SK-N-SH (cell line): ENCODE measurements at regions of chr17 and their contacts with region 1.

Region 1: DNA sequence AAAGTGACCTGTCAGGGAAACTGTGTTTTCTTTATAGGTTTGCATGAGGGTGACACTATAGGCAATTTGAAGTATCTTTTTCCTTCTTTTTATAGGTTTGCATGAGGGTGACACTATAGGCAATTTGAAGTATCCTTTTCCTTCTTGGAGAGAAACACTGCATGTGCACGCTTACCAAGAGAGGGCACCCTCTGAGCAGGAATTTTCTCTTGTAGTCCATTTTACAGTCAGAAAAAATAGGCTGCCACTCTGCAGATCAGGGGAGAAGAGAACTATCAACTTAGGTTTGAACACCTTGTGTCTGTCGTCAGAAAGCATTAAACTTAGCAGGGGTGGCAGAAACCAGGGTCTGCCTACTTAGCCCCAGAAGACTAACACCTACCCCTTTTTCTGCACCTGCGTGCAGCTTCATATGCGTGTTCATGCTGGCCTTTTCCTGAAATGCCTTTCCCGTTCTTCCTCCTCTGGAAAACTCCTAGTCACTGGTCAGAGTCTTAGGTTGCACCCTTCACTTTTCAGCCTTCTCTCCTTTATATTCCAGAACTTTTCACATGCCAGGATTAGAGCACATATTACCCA is 16.4 kb upstream of the SMIM36 start:
- DNase-seq: peak; percentile 74
- H3K4me3 ChIP-seq: no peak overlapping the region; a peak in 1 of 4 replicates
- H3K27ac ChIP-seq: no peak overlapping the region
- H3K4me1 ChIP-seq: peaks cover 0 to 2% of the 10 kb centered on the region in 2 experiments; a peak in 1 of 4 replicates
- H3K27me3 ChIP-seq: no peaks in the 10 kb centered on the region
- CTCF ChIP-seq: peak; percentile 87
- EP300 ChIP-seq: no peak
- RAD21 ChIP-seq: peak; percentile 99

Region 2: GRCh38 chr17:55452139-55452790 is 75.4 kb before region 1 on chr17:
- CTCF ChIA-PET with region 1: no interaction called
- POLR2A ChIA-PET with region 1: no interaction called
- DNase-seq: peak; percentile 50
- H3K4me3 ChIP-seq: no peak overlapping the region
- H3K27ac ChIP-seq: peak overlapping the region; percentile 81 to 92
- H3K4me1 ChIP-seq: peaks cover 21 to 55% of the 10 kb centered on the region in 2 experiments
- H3K27me3 ChIP-seq: no peaks in the 10 kb centered on the region
- CTCF ChIP-seq: no peak
- EP300 ChIP-seq: peak; percentile 9 to 47; a peak in 3 of 4 replicates
- RAD21 ChIP-seq: no peak

Region 3: GRCh38 chr17:55570360-55570759 is 42.7 kb after region 1 on chr17:
- CTCF ChIA-PET with region 1: interaction called, 15 read pairs
- POLR2A ChIA-PET with region 1: no interaction called
- DNase-seq: no peak
- H3K4me3 ChIP-seq: no peak overlapping the region
- H3K27ac ChIP-seq: no peak overlapping the region
- H3K4me1 ChIP-seq: peaks cover 0 to 22% of the 10 kb centered on the region in 2 experiments; a peak in 2 of 4 replicates
- H3K27me3 ChIP-seq: 0 out of 2 replicates have a peak, but pooled peaks cover 6% of the 10 kb centered on the region
- CTCF ChIP-seq: no peak
- EP300 ChIP-seq: no peak
- RAD21 ChIP-seq: no peak

Region 4: DNA sequence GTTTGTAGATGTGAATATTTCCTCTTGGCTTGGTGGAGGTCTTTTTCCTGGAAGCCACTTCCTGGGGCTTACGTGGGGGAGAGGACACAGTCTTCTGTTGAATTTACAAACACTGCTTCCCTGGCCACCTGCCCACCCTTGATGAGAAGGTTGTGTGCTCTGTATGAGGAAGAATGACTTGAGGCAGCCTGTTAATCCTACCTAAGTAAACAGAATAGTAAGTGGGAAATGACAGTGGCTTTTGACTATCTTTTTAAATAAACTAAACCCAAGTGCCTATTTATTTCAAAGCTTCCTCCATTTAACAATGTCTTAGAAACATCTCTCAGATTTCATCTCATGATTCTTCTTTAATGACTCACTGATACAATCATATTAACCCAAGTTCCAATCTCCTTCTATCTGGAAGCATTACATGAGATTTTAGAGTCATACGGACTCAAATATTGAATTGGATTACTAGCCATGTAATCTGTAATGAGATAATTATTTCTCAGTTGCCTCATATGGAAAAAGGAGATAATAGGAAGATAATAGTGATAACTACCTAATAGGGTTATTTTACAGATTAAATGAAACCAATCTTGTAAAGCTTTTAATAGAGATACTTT is 80.2 kb after region 1 on chr17:
- CTCF ChIA-PET with region 1: interaction called, 85 read pairs
- POLR2A ChIA-PET with region 1: no interaction called
- DNase-seq: no peak
- H3K4me3 ChIP-seq: no peak overlapping the region
- H3K27ac ChIP-seq: no peak overlapping the region
- H3K4me1 ChIP-seq: peaks cover 7 to 10% of the 10 kb centered on the region in 2 experiments; a peak in 3 of 4 replicates
- H3K27me3 ChIP-seq: no peaks in the 10 kb centered on the region
- CTCF ChIP-seq: no peak
- EP300 ChIP-seq: peak in 1 of 2 experiments; percentile 45; a peak in 1 of 4 replicates
- RAD21 ChIP-seq: no peak

Region 5: DNA sequence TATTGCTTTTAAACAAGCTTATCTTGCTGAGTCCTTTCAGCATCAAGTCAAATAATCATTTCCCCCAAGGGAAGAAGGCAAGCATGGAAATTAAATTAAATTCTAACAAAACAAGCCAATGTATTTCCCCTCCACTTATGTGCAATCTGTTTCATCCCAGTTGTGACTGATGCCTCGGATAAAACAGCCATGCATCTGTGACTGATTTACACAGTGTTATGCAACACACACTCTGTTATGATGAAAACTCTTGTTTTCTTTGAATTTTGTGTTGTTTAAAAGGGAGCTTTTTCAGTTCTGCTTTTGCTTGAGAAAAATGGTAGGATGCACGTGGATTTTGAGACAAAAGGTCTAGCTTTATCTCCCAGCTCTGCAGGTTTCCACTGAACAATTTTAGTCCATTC is 162.5 kb after region 1 on chr17:
- CTCF ChIA-PET with region 1: interaction called, 46 read pairs
- POLR2A ChIA-PET with region 1: no interaction called
- DNase-seq: peak; percentile 58
- H3K4me3 ChIP-seq: no peak overlapping the region
- H3K27ac ChIP-seq: peak overlapping the region in 1 of 2 experiments; percentile 99; a peak in 2 of 4 replicates
- H3K4me1 ChIP-seq: peaks cover 0 to 54% of the 10 kb centered on the region in 2 experiments; a peak in 3 of 4 replicates
- H3K27me3 ChIP-seq: no peaks in the 10 kb centered on the region
- CTCF ChIP-seq: no peak
- EP300 ChIP-seq: peak; percentile 22 to 99; a peak in 2 of 4 replicates
- RAD21 ChIP-seq: peak; percentile 38

Region 6: DNA sequence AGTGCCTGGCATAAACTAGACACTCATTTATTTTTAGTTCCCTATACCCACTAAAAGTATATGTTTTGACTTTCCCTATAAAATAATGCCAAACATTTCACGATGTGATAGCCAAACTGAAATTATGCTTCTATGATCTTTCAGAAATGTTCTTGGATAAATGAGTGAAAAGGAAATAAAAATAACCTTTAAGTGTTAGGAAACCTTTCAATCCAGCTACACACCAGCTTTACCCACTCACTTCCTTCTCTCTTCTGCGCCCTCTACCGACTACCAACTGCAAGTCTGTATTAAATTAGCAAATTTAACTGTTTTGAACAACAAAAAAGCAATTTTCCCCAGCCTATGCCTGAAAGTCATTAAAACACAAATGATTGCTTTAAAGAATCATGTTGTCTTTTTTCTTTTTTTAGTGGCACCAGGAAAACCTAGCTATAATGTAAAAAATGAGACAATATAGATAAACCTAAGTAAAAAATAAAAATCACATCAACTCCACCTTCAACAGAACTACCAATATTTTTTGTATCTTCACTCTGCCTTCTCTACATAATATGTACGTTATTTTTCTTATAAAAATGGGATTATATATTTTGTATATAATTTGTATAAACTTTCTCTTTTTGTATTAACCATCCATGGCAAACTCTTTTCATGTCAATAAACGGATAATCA is 208.2 kb after region 1 on chr17:
- CTCF ChIA-PET with region 1: interaction called, 175 read pairs
- POLR2A ChIA-PET with region 1: no interaction called
- DNase-seq: peak; percentile 52
- H3K4me3 ChIP-seq: no peak overlapping the region; a peak in 1 of 4 replicates
- H3K27ac ChIP-seq: no peak overlapping the region
- H3K4me1 ChIP-seq: peaks cover 14 to 39% of the 10 kb centered on the region in 2 experiments
- H3K27me3 ChIP-seq: no peaks in the 10 kb centered on the region
- CTCF ChIP-seq: peak; percentile 89
- EP300 ChIP-seq: no peak
- RAD21 ChIP-seq: peak; percentile 77

Region 7: GRCh38 chr17:55816532-55817396 is 289.1 kb after region 1 on chr17:
- CTCF ChIA-PET with region 1: interaction called, 16 read pairs
- POLR2A ChIA-PET with region 1: no interaction called
- DNase-seq: no peak
- H3K4me3 ChIP-seq: no peak overlapping the region
- H3K27ac ChIP-seq: no peak overlapping the region
- H3K4me1 ChIP-seq: no peaks in the 10 kb centered on the region; a peak in 1 of 4 replicates
- H3K27me3 ChIP-seq: no peaks in the 10 kb centered on the region
- CTCF ChIP-seq: no peak
- EP300 ChIP-seq: no peak
- RAD21 ChIP-seq: no peak